ENCODE measurements at regions of chr12 and their contacts with region 1.

Region 1: GRCh38 chr12:122642009-122642408 is 61.1 kb downstream of the HCAR2 start:
- DNase-seq: no peak
- ATAC-seq: no peak
- H3K4me3 Mint-ChIP-seq: no peak overlapping the region
- H3K27ac Mint-ChIP-seq: no peak overlapping the region
- H3K4me1 Mint-ChIP-seq: peaks cover 9% of the 10 kb centered on the region
- H3K27me3 Mint-ChIP-seq: no peaks in the 10 kb centered on the region

Region 2: GRCh38 chr12:122752464-122753318 is 110.7 kb after region 1 on chr12 and contains the start of gene DENR:
- CTCF ChIA-PET with region 1: interaction called, 11 read pairs
- DNase-seq: peak; percentile 99
- ATAC-seq: peak; percentile 96
- H3K4me3 Mint-ChIP-seq: peak within 1 kb of the TSS; percentile 90
- H3K27ac Mint-ChIP-seq: peak within 1 kb of the TSS; percentile 94
- H3K4me1 Mint-ChIP-seq: peaks cover 43% of the 10 kb centered on the region
- H3K27me3 Mint-ChIP-seq: no peaks in the 10 kb centered on the region
- total RNA-seq, gene DENR: 50.2 to 65.9 TPM

Measured in activated CD8-positive, alpha-beta memory T cell treated with anti-CD3 and anti-CD28 coated beads, Interleukin-2, amount 10 ng/mL, durations not matched to agents 7 days and 5 days (primary cell).